ENCODE measurements at regions of chr18 and their contacts with region 1.

Region 1: DNA sequence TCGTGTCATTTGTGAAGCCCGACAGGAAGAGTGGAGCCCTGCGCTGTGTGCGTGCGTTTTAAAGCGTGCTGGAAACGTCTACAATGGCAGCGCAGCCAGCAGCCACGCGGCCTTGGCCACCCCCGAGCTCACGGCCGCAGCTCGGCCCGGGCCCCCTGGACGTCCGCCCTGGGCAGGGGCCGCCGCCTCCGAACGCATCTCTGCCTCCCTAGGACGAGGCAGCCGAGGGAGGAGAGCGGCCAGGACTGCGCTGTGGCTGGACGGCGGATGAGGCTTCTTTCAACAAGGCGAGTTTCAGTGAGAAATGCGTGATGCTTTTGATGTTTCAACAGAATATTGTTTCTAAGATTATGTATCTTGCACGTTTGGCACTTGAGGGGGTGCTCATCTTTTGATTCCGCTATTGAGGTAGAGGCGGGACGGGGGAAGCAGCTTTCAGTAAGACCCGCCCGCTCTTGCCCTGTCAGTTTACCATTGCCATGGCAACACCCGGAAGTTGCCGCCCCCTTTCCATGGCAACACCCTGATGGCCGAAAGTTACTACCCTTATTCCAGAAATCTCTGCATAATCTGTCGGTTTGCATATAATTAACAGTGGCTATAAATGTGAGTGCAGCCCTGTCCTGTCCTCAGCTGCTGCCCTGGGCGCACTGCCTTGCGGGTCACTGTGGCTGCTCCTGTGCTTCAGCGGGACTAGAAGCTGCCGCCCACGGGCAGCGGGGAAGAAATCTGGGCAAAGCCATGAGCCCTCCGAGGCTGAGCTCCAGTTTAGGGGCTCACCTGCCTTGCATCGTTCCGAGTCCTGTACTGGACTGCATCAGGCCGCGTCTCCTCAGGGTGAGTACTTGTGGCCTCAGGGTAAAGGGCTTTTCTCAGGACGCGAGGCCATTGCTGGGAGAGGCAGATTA is 38.6 kb downstream of the ADNP2 start:
- DNase-seq: peak; percentile 86
- ATAC-seq: peak; percentile 86
- H3K4me3 ChIP-seq: peak overlapping the region; percentile 55 to 76 (median 66)
- H3K4me3 Mint-ChIP-seq: peak overlapping the region; percentile 94
- H3K27ac ChIP-seq: no peak overlapping the region
- H3K27ac Mint-ChIP-seq: peak overlapping the region; percentile 92
- H3K4me1 ChIP-seq: peaks cover 10 to 11% of the 10 kb centered on the region in 2 donors
- H3K4me1 Mint-ChIP-seq: peaks cover 20% of the 10 kb centered on the region
- H3K27me3 ChIP-seq: no peaks in the 10 kb centered on the region
- H3K27me3 Mint-ChIP-seq: no peaks in the 10 kb centered on the region
- CTCF ChIP-seq: no peak

Region 2: DNA sequence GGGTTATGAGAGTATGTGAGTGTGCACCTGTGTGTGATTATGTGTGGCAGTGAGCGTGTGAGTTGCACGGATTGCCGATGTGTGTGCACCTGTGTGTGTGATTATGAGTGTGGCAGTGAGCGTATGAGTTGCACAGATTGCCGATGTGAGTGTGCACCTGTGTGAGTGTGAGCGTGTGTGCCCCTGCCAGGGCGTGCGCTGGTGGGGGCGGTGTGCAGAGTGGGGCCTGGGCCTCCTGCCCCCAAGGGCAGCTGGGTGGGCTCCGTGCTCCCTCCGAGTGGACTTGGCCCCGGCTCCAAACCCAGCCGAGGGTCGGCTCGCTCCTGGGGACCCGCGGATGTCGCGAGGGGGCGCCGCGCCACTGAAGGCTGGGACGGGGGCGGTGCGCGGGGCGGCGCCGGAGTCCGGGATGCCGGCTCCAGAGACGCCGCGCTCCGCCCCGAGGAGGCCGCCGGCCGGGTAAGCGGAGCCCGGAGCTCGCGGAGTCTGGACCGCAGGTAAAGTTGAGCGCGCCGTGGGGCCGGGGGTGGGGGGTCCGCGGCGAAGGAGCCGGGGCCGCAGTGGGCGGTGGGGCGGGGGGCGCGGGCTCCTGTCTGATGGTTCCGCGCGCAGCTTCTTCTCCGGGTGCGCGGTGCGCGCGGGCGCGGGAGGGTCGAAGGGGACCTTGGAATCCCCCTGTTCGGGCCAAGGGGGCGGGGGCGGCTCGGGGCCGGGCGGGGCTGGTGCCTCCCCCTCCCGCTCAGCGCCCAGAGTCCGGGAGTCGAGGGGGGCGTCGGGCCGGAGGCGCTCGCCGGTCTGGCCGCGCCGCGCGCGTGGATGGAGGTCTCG is 349.9 kb before region 1 on chr18 and contains the start of gene KCNG2:
- CTCF ChIA-PET with region 1: no interaction called
- POLR2A ChIA-PET with region 1: no interaction called
- intact Hi-C with region 1: loop called (anchors 5 kb)
- DNase-seq: peak; percentile 47
- ATAC-seq: peak; percentile 65
- H3K4me3 ChIP-seq: peak within 1 kb of the TSS in 3 of 5 experiments; percentile 23 to 38 (median 27)
- H3K4me3 Mint-ChIP-seq: peak within 1 kb of the TSS; percentile 88
- H3K27ac ChIP-seq: no peak within 1 kb of the TSS
- H3K27ac Mint-ChIP-seq: peak within 1 kb of the TSS; percentile 17
- H3K4me1 ChIP-seq: peaks cover 29 to 33% of the 10 kb centered on the region in 2 donors
- H3K4me1 Mint-ChIP-seq: peaks cover 26% of the 10 kb centered on the region
- H3K27me3 ChIP-seq: peaks cover 0 to 33% (median 17%) of the 10 kb centered on the region in 4 experiments
- H3K27me3 Mint-ChIP-seq: peaks cover 40% of the 10 kb centered on the region
- CTCF ChIP-seq: no peak
- total RNA-seq, gene KCNG2: not detected in 2 replicates

Region 3: DNA sequence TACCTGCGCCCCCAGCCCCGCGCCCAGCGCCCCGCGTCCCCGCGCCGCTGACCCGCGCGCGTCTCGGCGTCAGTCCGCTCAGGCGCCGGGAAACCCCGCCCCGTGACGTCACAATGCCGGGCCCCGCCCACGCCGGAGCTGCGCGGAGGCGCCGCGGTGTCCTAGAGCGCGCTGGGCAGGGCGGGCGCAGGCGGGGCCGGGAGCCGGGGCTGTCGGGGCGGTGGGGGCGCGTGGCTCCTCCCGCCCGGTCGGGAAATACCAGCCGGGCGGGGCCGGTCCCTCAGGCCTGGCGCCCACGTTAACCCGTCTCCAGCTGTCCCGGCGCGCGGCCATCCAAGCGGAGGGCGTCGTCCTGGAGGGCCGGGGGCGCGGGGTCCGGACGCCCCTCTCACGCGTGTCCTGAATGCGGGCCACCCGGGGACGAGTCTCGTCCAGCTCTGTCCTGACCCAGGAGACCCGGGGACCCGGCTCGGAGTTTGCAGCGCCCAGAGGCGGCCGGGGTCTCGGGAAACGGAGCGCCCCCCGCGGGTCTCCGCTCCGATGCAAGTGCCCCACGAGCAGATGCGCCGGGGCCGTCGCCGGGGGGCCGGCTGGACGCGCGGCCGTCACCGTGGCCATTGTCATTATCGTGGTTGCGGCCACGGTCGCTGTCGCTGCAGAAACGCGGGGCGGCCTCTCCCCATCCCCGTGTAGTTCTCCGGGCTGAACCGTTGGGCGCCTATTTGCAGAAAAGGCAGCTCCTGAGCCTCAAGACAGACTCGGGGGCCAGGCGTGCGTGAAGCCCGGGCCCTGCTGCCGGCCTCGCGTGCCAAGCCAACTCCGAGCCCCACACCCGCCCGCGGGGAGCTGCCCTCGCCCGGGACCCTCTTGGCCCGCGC is 195.9 kb before region 1 on chr18 and contains the start of gene SLC66A2:
- CTCF ChIA-PET with region 1: no interaction called
- POLR2A ChIA-PET with region 1: no interaction called
- intact Hi-C with region 1: loop called (anchors 5 kb)
- DNase-seq: peak; percentile 92
- ATAC-seq: peak; percentile 83
- H3K4me3 ChIP-seq: peak within 1 kb of the TSS; percentile 58 to 73 (median 70)
- H3K4me3 Mint-ChIP-seq: peak within 1 kb of the TSS; percentile 92
- H3K27ac ChIP-seq: peak within 1 kb of the TSS; percentile 54 to 83
- H3K27ac Mint-ChIP-seq: peak within 1 kb of the TSS; percentile 84
- H3K4me1 ChIP-seq: peaks cover 17 to 37% of the 10 kb centered on the region in 2 donors
- H3K4me1 Mint-ChIP-seq: peaks cover 34% of the 10 kb centered on the region
- H3K27me3 ChIP-seq: no peaks in the 10 kb centered on the region
- H3K27me3 Mint-ChIP-seq: no peaks in the 10 kb centered on the region
- CTCF ChIP-seq: no peak
- total RNA-seq, gene SLC66A2: 44.4 and 45.6 TPM in 2 replicates

Region 4: GRCh38 chr18:79988451-79989194 is 159.0 kb before region 1 on chr18 and contains the start of gene TXNL4A:
- CTCF ChIA-PET with region 1: no interaction called
- POLR2A ChIA-PET with region 1: no interaction called
- intact Hi-C with region 1: loop called (anchors 10 kb)
- DNase-seq: peak; percentile 92
- ATAC-seq: peak; percentile 92
- H3K4me3 ChIP-seq: peak within 1 kb of the TSS; percentile 75 to 91 (median 89)
- H3K4me3 Mint-ChIP-seq: peak within 1 kb of the TSS; percentile 89
- H3K27ac ChIP-seq: peak within 1 kb of the TSS; percentile 87 to 94
- H3K27ac Mint-ChIP-seq: peak within 1 kb of the TSS; percentile 94
- H3K4me1 ChIP-seq: peaks cover 15 to 23% of the 10 kb centered on the region in 2 donors
- H3K4me1 Mint-ChIP-seq: peaks cover 32% of the 10 kb centered on the region
- H3K27me3 ChIP-seq: no peaks in the 10 kb centered on the region
- H3K27me3 Mint-ChIP-seq: no peaks in the 10 kb centered on the region
- CTCF ChIP-seq: no peak
- total RNA-seq, gene TXNL4A: 63.9 and 67.8 TPM in 2 replicates

Region 5: DNA sequence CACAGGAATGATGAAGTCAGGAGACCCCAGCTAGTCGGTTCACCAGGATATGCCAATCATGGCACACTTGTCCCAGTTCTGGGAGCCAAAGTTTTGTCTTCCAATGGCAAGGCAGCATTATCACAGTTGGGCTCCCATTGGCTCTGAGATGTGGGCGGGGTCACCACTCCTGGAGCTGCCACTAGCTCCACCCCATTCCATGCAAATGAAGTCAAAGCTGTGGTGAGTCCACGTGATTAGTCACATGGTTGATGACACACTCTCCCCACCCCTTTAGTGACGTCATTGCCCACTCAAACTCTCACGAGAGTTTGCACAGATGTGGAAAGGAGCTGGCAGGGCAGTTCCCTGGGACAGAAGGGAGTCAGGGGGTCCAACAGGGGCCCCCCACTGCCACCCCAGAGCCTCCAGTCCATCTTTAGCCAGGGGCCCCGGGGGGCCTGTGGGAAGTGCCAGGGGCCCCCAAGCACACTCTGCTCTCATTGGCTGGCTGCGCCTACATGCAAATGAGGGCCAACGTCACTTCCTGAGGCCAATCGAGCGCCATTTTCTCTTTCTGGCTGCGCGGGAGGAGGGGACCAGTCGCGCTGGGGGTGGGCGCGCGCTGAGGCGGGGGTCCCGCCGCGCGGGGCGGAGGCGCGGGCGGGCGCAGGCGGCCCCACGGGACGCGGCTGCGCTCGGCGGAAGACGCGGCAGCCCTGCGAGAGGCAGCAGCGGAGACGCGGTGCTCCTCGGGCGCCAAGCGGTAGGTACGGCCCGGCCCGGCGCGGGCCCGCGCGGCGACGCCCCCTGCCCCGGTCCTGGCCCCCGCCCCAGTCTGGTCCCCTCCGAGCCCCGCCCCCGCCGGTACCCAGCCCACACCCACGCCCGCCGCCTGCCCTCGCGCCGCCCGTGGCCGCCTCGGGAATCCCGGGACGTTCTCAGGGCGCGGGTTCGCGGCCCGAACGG is 38.7 kb before region 1 on chr18 and contains the start of gene ADNP2:
- CTCF ChIA-PET with region 1: no interaction called
- POLR2A ChIA-PET with region 1: interaction called, 3 read pairs
- intact Hi-C with region 1: loop called (anchors 1 kb)
- DNase-seq: peak; percentile 95
- ATAC-seq: peak; percentile 66
- H3K4me3 ChIP-seq: peak within 1 kb of the TSS; percentile 27 to 78 (median 62)
- H3K4me3 Mint-ChIP-seq: peak within 1 kb of the TSS; percentile 84
- H3K27ac ChIP-seq: peak within 1 kb of the TSS; percentile 84 to 85
- H3K27ac Mint-ChIP-seq: peak within 1 kb of the TSS; percentile 90
- H3K4me1 ChIP-seq: peaks cover 28 to 41% of the 10 kb centered on the region in 2 donors
- H3K4me1 Mint-ChIP-seq: peaks cover 48% of the 10 kb centered on the region
- H3K27me3 ChIP-seq: no peaks in the 10 kb centered on the region
- H3K27me3 Mint-ChIP-seq: no peaks in the 10 kb centered on the region
- CTCF ChIP-seq: no peak
- total RNA-seq, gene ADNP2: 14.7 and 16.1 TPM in 2 replicates

Region 6: GRCh38 chr18:80157708-80158343 is 10.2 kb after region 1 on chr18:
- CTCF ChIA-PET with region 1: interaction called, 21 read pairs
- POLR2A ChIA-PET with region 1: no interaction called
- intact Hi-C with region 1: no loop called
- DNase-seq: peak; percentile 77
- ATAC-seq: peak; percentile 70
- H3K4me3 ChIP-seq: no peak overlapping the region
- H3K4me3 Mint-ChIP-seq: no peak overlapping the region
- H3K27ac ChIP-seq: no peak overlapping the region
- H3K27ac Mint-ChIP-seq: no peak overlapping the region
- H3K4me1 ChIP-seq: peaks cover 3% of the 10 kb centered on the region in 2 donors
- H3K4me1 Mint-ChIP-seq: peaks cover 12% of the 10 kb centered on the region
- H3K27me3 ChIP-seq: peaks cover 0 to 8% (median 2%) of the 10 kb centered on the region in 4 experiments
- H3K27me3 Mint-ChIP-seq: no peaks in the 10 kb centered on the region
- CTCF ChIP-seq: peak; percentile 100

Region 7: GRCh38 chr18:80200171-80200931 is 52.7 kb after region 1 on chr18:
- CTCF ChIA-PET with region 1: no interaction called
- POLR2A ChIA-PET with region 1: no interaction called
- intact Hi-C with region 1: no loop called
- DNase-seq: no peak
- ATAC-seq: no peak
- H3K4me3 ChIP-seq: no peak overlapping the region
- H3K4me3 Mint-ChIP-seq: no peak overlapping the region
- H3K27ac ChIP-seq: no peak overlapping the region
- H3K27ac Mint-ChIP-seq: no peak overlapping the region
- H3K4me1 ChIP-seq: no peaks in the 10 kb centered on the region
- H3K4me1 Mint-ChIP-seq: no peaks in the 10 kb centered on the region
- H3K27me3 ChIP-seq: peaks cover 0 to 9% (median 1%) of the 10 kb centered on the region in 4 experiments
- H3K27me3 Mint-ChIP-seq: peaks cover 39% of the 10 kb centered on the region
- CTCF ChIP-seq: no peak